ENCODE measurements at regions of chr4 and their contacts with region 1.

Region 1: GRCh38 chr4:8176547-8177399 is 18.2 kb upstream of the ABLIM2 start:
- DNase-seq: peak; percentile 74
- H3K4me3 Mint-ChIP-seq: no peak overlapping the region
- H3K27ac Mint-ChIP-seq: no peak overlapping the region
- H3K4me1 Mint-ChIP-seq: peaks cover 18% of the 10 kb centered on the region
- H3K27me3 Mint-ChIP-seq: no peaks in the 10 kb centered on the region
- CTCF ChIP-seq: peak; percentile 95

Region 2: GRCh38 chr4:8165374-8165896 is 11.3 kb before region 1 on chr4:
- CTCF ChIA-PET with region 1: interaction called, 13 read pairs
- POLR2A ChIA-PET with region 1: no interaction called
- intact Hi-C with region 1: no loop called
- DNase-seq: no peak
- H3K4me3 Mint-ChIP-seq: no peak overlapping the region
- H3K27ac Mint-ChIP-seq: no peak overlapping the region
- H3K4me1 Mint-ChIP-seq: no peaks in the 10 kb centered on the region
- H3K27me3 Mint-ChIP-seq: peaks cover 17% of the 10 kb centered on the region
- CTCF ChIP-seq: no peak

Region 3: DNA sequence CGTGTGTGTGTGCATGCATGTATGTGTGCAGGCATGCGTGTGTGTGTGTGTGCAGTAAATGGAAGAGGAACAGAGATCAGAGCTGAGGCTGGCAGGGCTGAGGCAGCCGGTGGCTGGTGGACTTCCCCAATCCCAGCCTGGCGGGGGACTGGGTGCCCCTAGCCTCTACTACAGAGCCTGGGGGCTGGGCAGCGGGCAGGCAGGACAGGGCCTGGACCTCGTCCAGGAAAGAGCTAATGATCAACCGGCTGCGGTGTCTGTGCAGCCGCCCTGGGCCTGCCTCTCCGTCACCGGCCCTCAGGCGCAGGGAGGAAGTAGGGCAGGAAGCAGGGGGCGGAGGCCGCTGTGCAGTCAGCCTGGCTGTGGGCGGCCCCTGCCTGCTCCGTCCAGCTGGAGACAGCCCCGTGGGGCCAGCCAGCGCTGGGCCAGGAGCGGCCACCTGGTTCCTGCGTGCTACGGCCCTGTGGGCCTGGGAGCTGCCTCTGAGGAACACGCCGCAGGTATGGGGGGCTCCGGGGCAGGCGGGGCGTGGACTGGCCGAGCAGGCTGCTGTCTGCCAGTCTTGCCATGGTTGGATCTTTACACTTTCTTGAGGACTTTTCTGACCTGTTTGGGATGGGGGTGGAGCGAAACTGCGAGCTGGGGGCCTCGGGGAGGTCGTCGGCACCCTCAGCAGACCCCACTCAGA is 22.3 kb after region 1 on chr4 and contains the start of gene SH3TC1:
- CTCF ChIA-PET with region 1: interaction called, 185 read pairs
- POLR2A ChIA-PET with region 1: interaction called, 3 read pairs
- intact Hi-C with region 1: no loop called
- DNase-seq: peak; percentile 92
- H3K4me3 Mint-ChIP-seq: peak within 1 kb of the TSS; percentile 78
- H3K27ac Mint-ChIP-seq: peak within 1 kb of the TSS; percentile 86
- H3K4me1 Mint-ChIP-seq: peaks cover 19% of the 10 kb centered on the region
- H3K27me3 Mint-ChIP-seq: no peaks in the 10 kb centered on the region
- CTCF ChIP-seq: no peak
- total RNA-seq, gene SH3TC1: 20.4 and 28.8 TPM in 2 replicates

Region 4: DNA sequence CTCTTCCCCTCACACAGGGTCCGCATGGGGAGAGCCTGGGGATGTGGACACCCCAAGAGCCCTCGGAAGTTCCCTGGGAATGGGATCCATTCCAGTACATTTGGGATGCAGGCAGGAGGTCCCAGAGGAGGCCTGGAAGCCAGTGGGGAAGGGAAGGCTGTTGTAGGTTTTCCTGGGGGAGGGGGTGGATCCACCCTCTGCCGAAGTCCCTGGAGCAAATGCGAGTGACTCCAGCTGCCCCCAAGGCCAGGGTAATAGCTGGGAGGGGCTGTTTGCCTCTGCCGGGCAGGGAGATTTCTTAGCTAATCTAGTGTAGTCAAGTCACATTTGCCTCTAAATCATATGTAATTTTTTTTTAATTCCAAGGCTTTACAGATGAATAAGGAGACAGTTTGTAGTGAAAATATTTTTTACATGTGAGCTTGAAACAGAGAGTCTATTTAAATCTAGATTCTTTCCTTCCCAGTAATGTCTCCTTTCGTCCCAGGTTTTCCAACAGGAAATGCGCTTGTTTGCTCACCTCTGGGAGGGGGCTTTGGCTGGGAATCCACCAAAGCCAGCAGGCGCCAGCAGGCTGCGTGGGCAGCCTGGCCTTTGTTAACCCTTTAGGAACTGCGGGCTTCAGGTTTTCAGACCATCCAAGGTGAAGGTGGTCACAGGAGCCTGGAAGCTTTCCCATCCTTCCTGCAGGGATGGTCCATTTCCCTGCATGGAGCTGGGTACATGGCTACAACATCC is 49.1 kb after region 1 on chr4:
- CTCF ChIA-PET with region 1: interaction called, 11 read pairs
- POLR2A ChIA-PET with region 1: interaction called, 6 read pairs
- intact Hi-C with region 1: no loop called
- DNase-seq: no peak
- H3K4me3 Mint-ChIP-seq: no peak overlapping the region
- H3K27ac Mint-ChIP-seq: no peak overlapping the region
- H3K4me1 Mint-ChIP-seq: peaks cover 12% of the 10 kb centered on the region
- H3K27me3 Mint-ChIP-seq: no peaks in the 10 kb centered on the region
- CTCF ChIP-seq: no peak

Region 5: DNA sequence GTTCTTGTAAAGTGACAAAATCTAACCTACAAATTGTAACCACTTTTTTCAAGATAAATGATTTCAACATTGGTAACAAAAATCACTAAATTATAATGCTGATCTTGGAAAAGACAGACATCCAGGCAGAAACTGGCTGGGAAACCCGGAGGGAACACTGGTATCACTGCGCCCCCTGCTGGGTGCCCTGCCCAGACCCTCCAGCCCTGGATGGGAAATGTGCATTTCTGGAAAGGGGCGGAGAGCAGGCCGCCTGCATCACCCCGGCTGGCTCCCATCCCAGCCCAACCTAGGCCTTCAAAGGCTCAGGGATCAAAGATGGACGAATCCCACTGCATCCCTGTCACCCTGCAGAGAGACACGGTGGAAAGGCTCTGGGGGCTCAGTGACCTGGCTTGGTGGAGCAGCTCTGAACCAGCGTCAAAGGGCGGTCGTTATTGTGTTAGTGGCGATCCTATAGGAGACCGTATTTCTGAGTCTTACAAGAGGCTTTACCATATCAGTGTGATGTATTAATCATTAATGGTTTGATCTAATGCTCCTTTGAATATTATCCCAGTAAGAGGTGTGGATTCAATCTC is 226.5 kb after region 1 on chr4:
- CTCF ChIA-PET with region 1: interaction called, 21 read pairs
- POLR2A ChIA-PET with region 1: no interaction called
- intact Hi-C with region 1: loop called (anchors 2 kb)
- DNase-seq: peak; percentile 83
- H3K4me3 Mint-ChIP-seq: no peak overlapping the region
- H3K27ac Mint-ChIP-seq: no peak overlapping the region
- H3K4me1 Mint-ChIP-seq: no peaks in the 10 kb centered on the region
- H3K27me3 Mint-ChIP-seq: no peaks in the 10 kb centered on the region
- CTCF ChIP-seq: peak; percentile 88